Activated B cell treated with CpG ODN at 0.5 μM for 24 hours (primary cell): ENCODE measurements at regions of chr10 and their contacts with region 1.

Region 1: DNA sequence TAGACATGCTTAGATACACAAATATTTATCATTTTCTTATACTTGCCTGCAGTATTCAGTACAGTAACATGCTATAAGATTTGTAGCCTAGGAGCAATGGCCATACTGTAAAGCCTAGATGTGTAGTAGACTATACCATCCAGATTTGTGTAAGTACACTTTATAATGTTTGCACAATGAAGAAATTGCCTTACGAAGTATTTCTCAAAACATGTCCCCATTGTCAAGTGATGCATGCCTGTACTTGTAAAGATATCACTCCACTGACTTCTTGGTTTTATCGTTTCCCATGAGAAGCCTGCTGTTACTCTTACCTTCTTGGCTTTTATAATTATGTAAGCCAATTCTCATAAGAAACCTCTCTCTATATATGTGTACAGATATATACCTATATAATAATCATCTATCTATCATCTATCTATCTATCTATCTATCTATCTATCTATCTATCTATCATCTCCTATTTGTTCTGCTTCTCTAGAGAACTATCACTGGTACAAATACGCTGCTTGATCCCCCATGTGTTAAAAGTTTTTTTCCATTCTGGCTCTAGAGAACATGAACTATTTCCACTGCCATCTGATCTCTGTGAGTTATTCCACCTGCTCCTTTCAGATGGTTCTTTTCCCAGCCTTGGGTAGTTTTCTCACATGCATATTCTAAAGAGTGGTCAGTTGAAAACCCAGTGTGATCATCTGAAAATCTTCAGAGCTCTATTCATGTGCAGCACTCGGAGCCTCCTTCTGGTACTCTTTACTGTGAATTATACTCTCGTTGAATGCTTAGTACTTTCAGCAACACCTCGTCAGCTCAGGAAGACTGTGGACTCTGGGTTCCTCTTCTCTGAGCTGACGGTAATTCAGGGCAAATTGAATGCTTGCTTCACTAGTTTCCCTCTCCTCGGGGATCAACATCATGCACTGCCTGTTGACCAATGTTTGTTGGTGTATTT is 14.5 kb upstream of the VCL start:
- DNase-seq: no peak
- ATAC-seq: peak; percentile 62
- H3K4me3 Mint-ChIP-seq: peak overlapping the region; percentile 40
- H3K27ac Mint-ChIP-seq: no peak overlapping the region
- H3K4me1 Mint-ChIP-seq: peaks cover 26% of the 10 kb centered on the region
- H3K27me3 Mint-ChIP-seq: no peaks in the 10 kb centered on the region
- CTCF ChIP-seq: no peak

Region 2: DNA sequence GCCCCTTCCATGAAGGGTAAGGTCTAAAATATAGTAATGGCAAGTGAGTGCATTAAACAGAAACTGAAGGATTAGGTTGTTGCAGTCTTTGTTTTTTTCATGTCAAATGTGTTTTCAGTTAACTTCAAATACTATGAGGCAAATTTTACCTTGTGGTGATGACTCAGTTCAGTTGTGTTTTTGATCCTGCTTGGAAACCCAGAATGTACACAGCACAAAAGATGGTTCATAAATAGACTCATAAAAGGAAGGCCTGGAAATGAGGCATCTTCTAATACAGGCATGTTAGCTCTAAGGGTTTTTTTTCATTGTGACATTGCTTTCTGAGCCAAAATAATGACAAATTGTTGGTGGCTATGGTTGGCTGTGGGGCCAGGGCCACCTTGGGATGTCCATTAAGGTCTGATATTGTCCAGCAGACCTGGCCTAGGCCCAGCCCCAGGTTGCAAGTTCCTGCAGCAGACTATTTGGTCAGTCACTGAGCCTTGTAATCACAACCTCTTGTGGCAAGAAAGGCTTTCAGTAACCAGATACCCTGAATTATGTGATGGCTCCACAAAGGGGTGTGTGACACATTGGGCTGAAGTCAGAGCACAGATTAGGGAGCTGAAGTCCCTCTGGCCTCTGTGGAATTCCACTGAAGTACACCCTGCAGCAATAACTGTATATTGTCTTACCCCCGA is 1059.1 kb after region 1 on chr10:
- CTCF ChIA-PET with region 1: no interaction called
- POLR2A ChIA-PET with region 1: interaction called, 13 read pairs
- intact Hi-C with region 1: no loop called
- DNase-seq: no peak
- ATAC-seq: no peak
- H3K4me3 Mint-ChIP-seq: no peak overlapping the region
- H3K27ac Mint-ChIP-seq: no peak overlapping the region
- H3K4me1 Mint-ChIP-seq: peaks cover 5% of the 10 kb centered on the region
- H3K27me3 Mint-ChIP-seq: peaks cover 2% of the 10 kb centered on the region
- CTCF ChIP-seq: no peak

Region 3: DNA sequence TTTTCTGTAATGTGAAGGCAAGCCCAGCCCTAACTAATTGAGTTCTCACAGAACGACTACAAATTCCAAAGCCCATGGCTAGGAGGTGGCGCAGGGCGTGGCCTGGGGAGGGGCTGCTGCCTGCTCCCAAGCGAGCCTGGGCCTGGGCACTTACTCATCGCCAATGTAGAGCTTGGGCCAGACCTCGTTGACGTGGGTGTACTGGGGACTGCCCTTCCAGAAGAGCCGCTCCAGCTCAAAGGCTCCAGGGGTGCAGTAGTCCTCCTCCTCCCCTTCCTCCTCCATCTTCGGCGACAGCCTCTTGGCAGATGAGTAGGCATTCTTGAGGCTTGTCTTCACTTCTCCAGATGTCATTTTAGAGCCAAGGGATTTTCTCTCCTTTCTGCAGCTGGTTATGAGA is 1074.8 kb after region 1 on chr10:
- CTCF ChIA-PET with region 1: no interaction called
- POLR2A ChIA-PET with region 1: interaction called, 11 read pairs
- intact Hi-C with region 1: no loop called
- DNase-seq: no peak
- ATAC-seq: no peak
- H3K4me3 Mint-ChIP-seq: no peak overlapping the region
- H3K27ac Mint-ChIP-seq: no peak overlapping the region
- H3K4me1 Mint-ChIP-seq: no peaks in the 10 kb centered on the region
- H3K27me3 Mint-ChIP-seq: no peaks in the 10 kb centered on the region
- CTCF ChIP-seq: no peak